HEK293 (cell line): ENCODE measurements at regions of chr20 and their contacts with region 1.

Region 1: DNA sequence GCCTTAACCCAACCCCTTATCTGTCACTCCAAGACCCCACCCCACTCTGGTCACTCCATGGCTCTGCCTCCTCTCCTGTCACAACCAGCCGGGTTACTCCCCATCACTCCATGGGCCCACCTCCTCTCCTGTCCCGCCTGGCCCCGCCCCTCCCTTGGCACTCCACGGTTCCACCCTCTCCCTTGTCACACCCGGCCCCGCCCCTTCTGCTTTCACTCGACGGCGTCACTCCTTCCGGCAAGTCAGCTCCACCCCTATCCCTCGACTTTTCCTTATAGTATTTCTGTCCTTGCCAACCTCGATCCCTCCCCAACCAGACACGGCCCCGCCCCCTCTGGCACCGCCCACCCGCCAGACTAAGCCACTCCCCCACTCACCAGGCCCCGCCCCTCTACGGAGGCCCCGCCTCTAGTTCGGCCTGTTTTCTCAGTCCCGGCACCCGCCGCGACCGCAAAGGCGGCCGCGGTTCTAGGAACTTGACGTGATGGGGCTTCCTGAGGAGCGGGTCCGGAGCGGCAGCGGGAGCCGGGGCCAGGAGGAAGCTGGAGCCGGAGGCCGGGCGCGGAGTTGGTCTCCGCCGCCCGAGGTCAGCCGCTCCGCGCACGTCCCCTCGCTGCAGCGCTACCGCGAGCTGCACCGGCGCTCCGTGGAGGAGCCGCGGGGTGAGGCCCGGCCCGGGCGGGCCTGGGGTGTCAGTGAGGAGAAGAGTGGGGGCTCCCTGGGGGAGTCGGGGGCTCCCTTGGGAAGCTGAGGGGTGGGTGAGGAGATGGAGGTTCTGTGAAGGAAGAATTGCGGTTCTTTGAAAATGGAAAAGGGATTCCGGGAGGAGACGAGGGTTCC is at the start of gene ACSS2:
- H3K4me3 ChIP-seq: peak within 1 kb of the TSS; percentile 71
- H3K27ac ChIP-seq: peak within 1 kb of the TSS; percentile 29; the same call in 1 of the 2 replicates
- H3K4me1 ChIP-seq: peaks cover 5% of the 10 kb centered on the region
- CTCF ChIP-seq: no peak

Region 2: GRCh38 chr20:34955232-34956040 is 79.1 kb after region 1 on chr20 and contains the starts of genes GSS and MYH7B:
- CTCF ChIA-PET with region 1: interaction called, 40 read pairs
- POLR2A ChIA-PET with region 1: interaction called, 13 read pairs
- H3K4me3 ChIP-seq: peak within 1 kb of the TSS; percentile 73
- H3K27ac ChIP-seq: peak within 1 kb of the TSS; percentile 77
- H3K4me1 ChIP-seq: no peaks in the 10 kb centered on the region; the same call in 1 of the 2 replicates
- CTCF ChIP-seq: peak; percentile 94

Region 3: DNA sequence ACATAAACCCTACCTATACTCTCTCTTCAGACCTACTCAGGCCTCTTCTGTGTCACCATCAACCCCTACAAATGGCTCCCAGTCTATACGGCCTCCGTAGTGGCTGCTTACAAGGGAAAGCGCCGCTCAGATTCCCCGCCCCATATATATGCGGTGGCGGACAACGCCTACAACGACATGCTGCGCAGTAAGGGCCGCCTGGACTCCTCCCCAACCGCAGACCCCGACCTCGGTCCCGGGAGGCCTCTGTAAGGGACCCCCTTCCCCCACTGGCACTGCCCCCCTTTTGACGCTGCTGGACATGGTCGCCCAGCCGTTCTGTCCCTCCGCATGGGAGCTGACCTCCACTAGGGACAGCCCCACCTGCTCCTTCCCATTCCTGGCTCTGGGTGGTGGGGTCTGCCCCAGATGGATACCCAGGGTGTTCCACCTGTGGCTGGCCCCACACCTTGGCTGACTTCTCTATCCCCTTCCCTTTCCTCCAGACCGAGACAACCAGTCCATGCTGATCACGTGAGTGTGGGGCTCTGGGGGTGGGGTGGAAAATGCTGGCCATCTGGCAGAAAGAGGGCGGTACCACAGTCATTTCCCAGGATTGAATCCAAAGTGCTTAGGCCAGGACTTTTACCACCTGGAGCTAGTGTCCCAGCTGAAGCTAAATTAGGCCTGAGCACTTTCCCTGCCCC is 104.3 kb after region 1 on chr20:
- CTCF ChIA-PET with region 1: no interaction called
- POLR2A ChIA-PET with region 1: no interaction called
- H3K4me3 ChIP-seq: no peak overlapping the region
- H3K27ac ChIP-seq: no peak overlapping the region
- H3K4me1 ChIP-seq: no peaks in the 10 kb centered on the region
- CTCF ChIP-seq: no peak